ENCODE measurements at regions of chr12 and their contacts with region 1.

Region 1: GRCh38 chr12:95574799-95575452 is 23.6 kb upstream of the USP44 start:
- H3K4me3 ChIP-seq: no peak overlapping the region
- H3K27ac ChIP-seq: no peak overlapping the region
- H3K4me1 ChIP-seq: no peaks in the 10 kb centered on the region; the same call in 1 of the 2 replicates
- CTCF ChIP-seq: peak; percentile 45; the same call in 1 of the 2 replicates

Region 2: DNA sequence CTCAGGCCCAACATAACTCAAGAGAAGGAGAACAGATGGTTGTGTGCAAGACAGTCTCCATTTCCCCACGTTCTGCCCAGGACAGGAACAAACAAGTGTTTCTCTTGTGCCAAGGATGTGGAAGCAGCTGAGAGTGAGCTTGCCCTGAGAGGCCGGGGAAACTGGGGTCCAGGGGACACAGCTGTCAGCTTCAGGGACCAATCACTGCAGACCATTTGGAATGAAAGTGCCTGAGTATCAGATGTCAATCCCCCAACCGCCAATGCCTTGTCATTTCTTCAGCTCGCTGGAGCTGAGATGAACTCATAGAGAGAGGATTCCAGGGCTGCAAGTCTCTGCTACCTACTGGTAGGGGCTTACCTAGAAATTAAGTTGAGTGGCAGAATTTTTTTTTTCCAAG is 172.8 kb before region 1 on chr12:
- CTCF ChIA-PET with region 1: no interaction called
- POLR2A ChIA-PET with region 1: no interaction called
- H3K4me3 ChIP-seq: no peak overlapping the region
- H3K27ac ChIP-seq: no peak overlapping the region
- H3K4me1 ChIP-seq: no peaks in the 10 kb centered on the region
- CTCF ChIP-seq: no peak

Region 3: GRCh38 chr12:95593266-95593871 is 18.4 kb after region 1 on chr12:
- CTCF ChIA-PET with region 1: interaction called, 12 read pairs
- POLR2A ChIA-PET with region 1: no interaction called
- H3K4me3 ChIP-seq: no peak overlapping the region
- H3K27ac ChIP-seq: no peak overlapping the region
- H3K4me1 ChIP-seq: no peaks in the 10 kb centered on the region
- CTCF ChIP-seq: no peak

Region 4: GRCh38 chr12:95611676-95612309 is 36.9 kb after region 1 on chr12:
- CTCF ChIA-PET with region 1: no interaction called
- POLR2A ChIA-PET with region 1: no interaction called
- H3K4me3 ChIP-seq: no peak overlapping the region
- H3K27ac ChIP-seq: no peak overlapping the region
- H3K4me1 ChIP-seq: no peaks in the 10 kb centered on the region
- CTCF ChIP-seq: no peak